Ovary (tissue), 10 donors: ENCODE measurements at regions of chr16 and their contacts with region 1.

Region 1: GRCh38 chr16:49921791-49922456 is 66.0 kb upstream of the ZNF423 start:
- DNase-seq: peak; percentile 59 to 79 (median 74)
- H3K4me3 ChIP-seq: no peak overlapping the region
- H3K27ac ChIP-seq: no peak overlapping the region
- H3K4me1 ChIP-seq: no peaks in the 10 kb centered on the region
- H3K27me3 ChIP-seq: no peaks in the 10 kb centered on the region
- CTCF ChIP-seq: peak; percentile 36 to 62 (median 57)
- EP300 ChIP-seq: no peak
- POLR2A ChIP-seq: no peak

Region 2: DNA sequence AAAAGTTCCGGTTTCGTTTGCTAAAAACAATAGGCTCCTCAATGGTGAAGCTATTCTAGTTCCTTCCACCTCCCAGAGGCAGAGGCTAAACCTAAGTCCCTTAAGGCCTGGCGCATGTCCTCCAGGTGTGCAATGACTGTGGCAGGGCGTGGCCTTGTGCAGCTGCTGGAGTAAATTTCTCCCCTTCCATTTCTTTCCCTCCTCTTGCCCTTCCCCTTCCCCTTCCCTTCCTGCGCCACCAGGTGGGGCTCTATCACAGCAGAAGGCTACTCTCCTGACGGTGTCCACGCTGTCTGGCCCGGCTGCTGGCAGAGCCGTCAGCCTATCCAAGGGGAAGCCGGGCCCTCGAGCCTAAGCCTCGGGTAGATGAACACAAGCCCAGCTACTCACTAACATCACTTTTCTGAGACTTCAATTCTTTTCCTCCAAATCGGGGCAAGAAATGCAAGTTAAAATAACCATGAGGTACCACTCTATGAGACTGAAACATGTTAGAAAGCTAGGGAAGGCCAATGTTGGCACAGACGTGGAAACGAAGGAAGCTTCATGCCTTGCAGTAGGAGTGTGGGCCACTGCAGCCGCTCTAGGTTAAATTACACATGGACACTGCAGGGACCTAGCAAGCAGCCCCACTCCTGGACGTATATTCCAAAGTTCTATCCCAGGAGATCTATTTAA is 513.9 kb before region 1 on chr16:
- intact Hi-C with region 1: loop called in 3 of 4 experiments (anchors 1 to 5 kb)
- DNase-seq: peak; percentile 85 to 92 (median 86)
- H3K4me3 ChIP-seq: no peak overlapping the region
- H3K27ac ChIP-seq: no peak overlapping the region
- H3K4me1 ChIP-seq: no peaks in the 10 kb centered on the region
- H3K27me3 ChIP-seq: no peaks in the 10 kb centered on the region
- CTCF ChIP-seq: peak; percentile 74 to 85 (median 85)
- EP300 ChIP-seq: no peak
- POLR2A ChIP-seq: no peak

Region 3: DNA sequence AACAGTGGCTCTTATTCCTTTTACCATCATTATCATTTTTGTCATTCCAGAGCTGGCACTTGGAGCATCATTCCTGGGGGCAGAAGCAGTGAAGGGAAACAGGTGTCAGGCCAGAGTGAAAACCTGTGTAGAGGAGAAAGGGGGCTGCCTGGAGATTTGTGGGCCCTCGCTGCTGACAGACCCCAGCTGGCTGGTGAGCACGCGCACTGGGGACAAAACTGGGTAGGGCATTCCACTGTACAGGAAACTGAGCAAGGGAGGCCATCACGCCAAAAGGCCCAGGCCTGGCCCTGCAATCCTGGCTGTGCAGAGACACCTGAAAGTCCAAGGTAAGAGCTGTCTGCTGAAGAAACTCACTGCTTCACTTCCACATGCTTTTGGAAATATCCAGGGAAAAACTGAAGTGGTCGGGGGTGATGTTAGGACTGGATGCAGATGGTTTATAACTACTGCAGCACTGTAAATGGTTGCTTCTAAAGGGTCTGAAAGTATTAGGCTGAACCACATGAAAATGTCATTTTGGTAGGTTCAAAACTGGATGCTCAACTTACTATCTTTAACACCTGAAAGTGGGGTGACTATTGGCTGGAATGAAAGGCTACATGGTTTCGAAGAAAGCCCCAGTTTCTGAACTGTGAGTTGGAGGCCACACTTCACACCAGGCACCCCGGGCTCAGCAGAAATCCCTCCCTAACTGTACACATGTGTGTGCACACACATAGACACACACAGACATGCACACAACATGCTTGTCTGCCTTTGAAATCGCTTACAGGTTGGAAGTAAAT is 323.3 kb before region 1 on chr16:
- intact Hi-C with region 1: no loop called
- DNase-seq: peak in 1 of 5 donors; percentile 6
- H3K4me3 ChIP-seq: no peak overlapping the region
- H3K27ac ChIP-seq: no peak overlapping the region
- H3K4me1 ChIP-seq: peaks cover 8% of the 10 kb centered on the region
- H3K27me3 ChIP-seq: no peaks in the 10 kb centered on the region
- CTCF ChIP-seq: no peak
- EP300 ChIP-seq: no peak
- POLR2A ChIP-seq: no peak

Region 4: DNA sequence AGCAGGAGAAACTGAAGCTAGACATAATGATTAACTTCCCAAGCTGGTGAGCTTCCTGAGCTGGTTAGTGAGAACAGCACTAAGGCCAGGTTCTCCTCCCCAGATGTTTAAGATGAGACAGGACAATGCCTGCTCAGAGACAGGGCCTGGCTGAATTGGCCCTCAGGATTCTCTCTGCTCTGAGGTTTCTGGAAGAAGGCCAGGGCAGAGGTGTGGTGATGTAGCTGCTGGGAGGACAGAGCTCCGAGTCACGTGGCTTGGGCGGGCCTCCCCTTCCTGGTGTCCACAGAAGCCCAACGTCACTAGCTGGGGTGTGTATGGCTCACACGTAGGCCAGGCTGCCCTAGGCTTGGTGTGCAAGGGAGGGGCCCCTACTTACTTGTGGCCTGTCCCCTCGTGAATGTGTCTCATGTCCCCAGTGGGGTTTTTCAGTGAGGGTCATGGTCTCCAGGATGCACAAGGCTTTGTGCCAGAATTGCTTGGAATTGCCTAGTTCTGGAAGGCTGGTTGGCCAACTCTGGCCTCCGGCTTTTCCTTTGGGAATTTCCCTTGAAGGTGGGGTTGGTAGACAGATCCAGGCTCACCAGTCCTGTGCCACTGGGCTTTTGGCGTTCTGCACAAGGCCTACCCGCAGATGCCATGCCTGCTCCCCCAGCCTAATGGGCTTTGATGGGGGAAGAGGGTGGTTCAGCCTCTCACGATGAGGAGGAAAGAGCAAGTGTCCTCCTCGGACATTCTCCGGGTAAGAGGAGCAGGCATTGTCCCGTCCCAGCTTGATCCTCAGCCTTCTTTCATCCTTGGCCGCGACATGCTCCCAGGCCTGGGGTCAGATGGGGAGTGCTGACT is 774.9 kb after region 1 on chr16:
- intact Hi-C with region 1: no loop called
- DNase-seq: peak; percentile 43 to 63 (median 51)
- H3K4me3 ChIP-seq: no peak overlapping the region
- H3K27ac ChIP-seq: no peak overlapping the region
- H3K4me1 ChIP-seq: peaks cover 10% of the 10 kb centered on the region
- H3K27me3 ChIP-seq: no peaks in the 10 kb centered on the region
- CTCF ChIP-seq: no peak
- EP300 ChIP-seq: no peak
- POLR2A ChIP-seq: no peak